PC-3 (cell line): ENCODE measurements at regions of chr14 and their contacts with region 1.

Region 1: GRCh38 chr14:55333711-55334485 is 62.7 kb downstream of the FBXO34 start:
- DNase-seq: peak; percentile 45
- ATAC-seq: peak; percentile 89
- H3K4me3 ChIP-seq: no peak overlapping the region
- H3K27ac ChIP-seq: peak overlapping the region; percentile 6
- H3K4me1 ChIP-seq: peaks cover 28% of the 10 kb centered on the region
- H3K27me3 ChIP-seq: no peaks in the 10 kb centered on the region
- CTCF ChIP-seq: no peak

Region 2: GRCh38 chr14:54278087-54278486 is 1055.8 kb before region 1 on chr14:
- CTCF ChIA-PET with region 1: no interaction called
- POLR2A ChIA-PET with region 1: no interaction called
- intact Hi-C with region 1: no loop called
- DNase-seq: no peak
- ATAC-seq: no peak
- H3K4me3 ChIP-seq: no peak overlapping the region
- H3K27ac ChIP-seq: no peak overlapping the region
- H3K4me1 ChIP-seq: no peaks in the 10 kb centered on the region
- H3K27me3 ChIP-seq: no peaks in the 10 kb centered on the region
- CTCF ChIP-seq: no peak

Region 3: DNA sequence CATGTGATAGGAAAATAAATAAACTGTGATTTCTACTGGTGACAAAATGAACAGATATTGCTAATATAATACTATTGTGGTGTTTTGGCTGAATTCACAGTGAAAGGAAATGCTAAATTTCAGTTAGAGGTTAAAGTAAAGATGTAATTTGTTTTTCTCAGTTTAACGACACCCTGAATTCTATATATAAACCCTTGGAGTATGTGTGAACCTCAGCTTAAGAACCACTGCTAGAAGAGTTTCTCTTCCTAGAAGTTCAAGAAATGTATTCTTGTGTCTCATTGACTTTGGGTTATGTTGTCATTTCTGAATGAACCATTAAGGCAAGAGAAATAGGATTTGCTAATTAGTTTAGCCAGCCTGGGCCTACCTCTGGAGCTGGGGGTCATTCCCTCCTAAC is 54.5 kb before region 1 on chr14:
- CTCF ChIA-PET with region 1: no interaction called
- POLR2A ChIA-PET with region 1: interaction called, 12 read pairs
- intact Hi-C with region 1: no loop called
- DNase-seq: no peak
- ATAC-seq: no peak
- H3K4me3 ChIP-seq: no peak overlapping the region
- H3K27ac ChIP-seq: no peak overlapping the region
- H3K4me1 ChIP-seq: peaks cover 6% of the 10 kb centered on the region
- H3K27me3 ChIP-seq: no peaks in the 10 kb centered on the region
- CTCF ChIP-seq: no peak

Region 4: DNA sequence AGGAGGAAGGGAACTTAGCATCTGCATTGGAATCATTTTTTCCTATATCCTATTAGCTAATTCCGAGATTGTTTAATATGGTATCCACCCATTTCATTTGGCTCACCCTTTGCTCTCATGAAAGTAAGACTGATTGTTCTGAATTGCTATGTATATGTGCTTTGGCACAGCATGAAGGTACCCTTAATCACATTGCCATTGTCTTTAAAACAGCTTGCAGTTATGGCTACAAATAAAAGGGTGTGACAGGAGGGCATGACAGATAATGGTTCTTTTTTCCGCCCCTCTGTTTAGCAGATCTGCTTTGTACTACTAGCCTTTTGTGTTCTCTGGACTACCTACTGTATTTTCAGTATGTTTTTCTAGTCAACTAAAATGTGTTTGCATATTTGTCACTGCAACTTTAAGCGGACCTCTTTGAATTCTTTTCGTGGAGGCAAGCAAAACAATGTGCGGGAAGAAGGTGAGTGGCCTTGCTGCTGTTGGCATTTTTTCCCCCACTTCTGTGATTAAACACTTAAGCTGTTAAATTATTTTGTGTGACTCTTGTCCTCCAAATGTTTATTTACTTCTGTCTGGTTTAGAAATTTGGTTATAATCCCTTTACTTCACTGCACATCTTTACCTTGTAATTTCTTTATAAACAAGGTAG is 26.8 kb before region 1 on chr14:
- CTCF ChIA-PET with region 1: no interaction called
- POLR2A ChIA-PET with region 1: no interaction called
- intact Hi-C with region 1: loop called (anchors 2 kb)
- DNase-seq: no peak
- ATAC-seq: peak; percentile 57
- H3K4me3 ChIP-seq: no peak overlapping the region
- H3K27ac ChIP-seq: no peak overlapping the region
- H3K4me1 ChIP-seq: no peaks in the 10 kb centered on the region
- H3K27me3 ChIP-seq: no peaks in the 10 kb centered on the region
- CTCF ChIP-seq: no peak

Region 5: GRCh38 chr14:55316567-55316966 is 17.3 kb before region 1 on chr14:
- CTCF ChIA-PET with region 1: no interaction called
- POLR2A ChIA-PET with region 1: interaction called, 12 read pairs
- intact Hi-C with region 1: no loop called
- DNase-seq: no peak
- ATAC-seq: no peak
- H3K4me3 ChIP-seq: no peak overlapping the region
- H3K27ac ChIP-seq: no peak overlapping the region
- H3K4me1 ChIP-seq: no peaks in the 10 kb centered on the region
- H3K27me3 ChIP-seq: no peaks in the 10 kb centered on the region
- CTCF ChIP-seq: no peak

Region 6: GRCh38 chr14:55366271-55366670 is 32.4 kb after region 1 on chr14:
- CTCF ChIA-PET with region 1: no interaction called
- POLR2A ChIA-PET with region 1: no interaction called
- intact Hi-C with region 1: loop called (anchors 1 kb)
- DNase-seq: peak; percentile 96
- ATAC-seq: peak; percentile 97
- H3K4me3 ChIP-seq: peak overlapping the region; percentile 5; the same call in 1 of the 2 replicates
- H3K27ac ChIP-seq: peak overlapping the region; percentile 81
- H3K4me1 ChIP-seq: peaks cover 25% of the 10 kb centered on the region
- H3K27me3 ChIP-seq: no peaks in the 10 kb centered on the region
- CTCF ChIP-seq: no peak